GM12878 (cell line): ENCODE measurements at regions of chr9 and their contacts with region 1.

Region 1: GRCh38 chr9:15510789-15511575 is at the start of gene PSIP1:
- DNase-seq: peak; percentile 85
- ATAC-seq: peak; percentile 75
- H3K4me3 ChIP-seq: peak within 1 kb of the TSS; percentile 93
- H3K27ac ChIP-seq: peak within 1 kb of the TSS; percentile 99
- H3K4me1 ChIP-seq: peaks cover 13% of the 10 kb centered on the region
- H3K27me3 ChIP-seq: no peaks in the 10 kb centered on the region
- CTCF ChIP-seq: no peak
- EP300 ChIP-seq: peak; percentile 57 to 77; a peak in 2 of 4 replicates
- POLR2A ChIP-seq: peak; percentile 95
- RAD21 ChIP-seq: no peak; the same call in 1 of the 2 replicates
- polyA plus RNA-seq, gene PSIP1: 75.5 to 115 TPM

Region 2: GRCh38 chr9:15469406-15469805 is 41.6 kb before region 1 on chr9:
- CTCF ChIA-PET with region 1: interaction called, 5 read pairs
- POLR2A ChIA-PET with region 1: interaction called, 3 read pairs
- RAD21 ChIA-PET with region 1: interaction called, 4 read pairs
- SMC1A ChIA-PET with region 1: interaction called, 15 read pairs
- in situ Hi-C with region 1: no loop called
- intact Hi-C with region 1: no loop called
- DNase-seq: no peak
- ATAC-seq: no peak
- H3K4me3 ChIP-seq: no peak overlapping the region
- H3K27ac ChIP-seq: no peak overlapping the region
- H3K4me1 ChIP-seq: no peaks in the 10 kb centered on the region
- H3K27me3 ChIP-seq: no peaks in the 10 kb centered on the region
- CTCF ChIP-seq: no peak
- EP300 ChIP-seq: no peak
- POLR2A ChIP-seq: no peak
- RAD21 ChIP-seq: no peak

Region 3: GRCh38 chr9:15522130-15522755 is 11.3 kb after region 1 on chr9:
- CTCF ChIA-PET with region 1: interaction called, 23 read pairs
- POLR2A ChIA-PET with region 1: interaction called, 4 read pairs
- RAD21 ChIA-PET with region 1: interaction called, 9 read pairs
- SMC1A ChIA-PET with region 1: interaction called, 57 read pairs
- in situ Hi-C with region 1: no loop called
- intact Hi-C with region 1: no loop called
- DNase-seq: no peak
- ATAC-seq: no peak
- H3K4me3 ChIP-seq: no peak overlapping the region
- H3K27ac ChIP-seq: no peak overlapping the region
- H3K4me1 ChIP-seq: no peaks in the 10 kb centered on the region
- H3K27me3 ChIP-seq: no peaks in the 10 kb centered on the region
- CTCF ChIP-seq: no peak
- EP300 ChIP-seq: no peak
- POLR2A ChIP-seq: no peak
- RAD21 ChIP-seq: no peak

Region 4: GRCh38 chr9:15552636-15553527 is 41.9 kb after region 1 on chr9 and contains the start of gene CCDC171:
- CTCF ChIA-PET with region 1: interaction called, 14 read pairs
- POLR2A ChIA-PET with region 1: interaction called, 10 read pairs
- RAD21 ChIA-PET with region 1: interaction called, 13 read pairs
- SMC1A ChIA-PET with region 1: interaction called, 6 read pairs
- in situ Hi-C with region 1: no loop called
- intact Hi-C with region 1: loop called (anchors 2 kb)
- DNase-seq: peak; percentile 75
- ATAC-seq: peak; percentile 88
- H3K4me3 ChIP-seq: peak within 1 kb of the TSS; percentile 95
- H3K27ac ChIP-seq: peak within 1 kb of the TSS; percentile 80
- H3K4me1 ChIP-seq: peaks cover 8% of the 10 kb centered on the region
- H3K27me3 ChIP-seq: no peaks in the 10 kb centered on the region
- CTCF ChIP-seq: no peak
- EP300 ChIP-seq: no peak; a peak in 1 of 4 replicates
- POLR2A ChIP-seq: peak; percentile 74
- RAD21 ChIP-seq: no peak
- polyA plus RNA-seq, gene CCDC171: 1.00 to 1.1 TPM

Region 5: DNA sequence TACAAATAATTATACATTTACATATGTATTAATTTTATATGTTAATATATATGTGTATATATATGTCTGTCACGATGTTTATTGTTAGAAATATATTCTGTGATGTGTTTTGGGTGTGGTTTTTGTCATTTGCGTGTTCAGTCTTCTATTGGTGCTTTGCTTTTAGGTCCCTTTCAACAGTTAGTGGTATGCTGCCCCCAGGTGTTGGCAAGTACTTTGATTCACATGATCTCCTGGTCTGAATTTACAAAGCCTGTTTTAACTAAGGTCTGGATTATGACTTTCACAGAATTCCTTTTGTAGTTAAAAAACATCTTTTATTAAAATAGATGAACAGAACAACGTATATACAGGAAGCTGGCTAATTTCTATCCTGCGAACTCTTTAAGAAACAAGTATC is 313.3 kb after region 1 on chr9:
- CTCF ChIA-PET with region 1: no interaction called
- POLR2A ChIA-PET with region 1: no interaction called
- RAD21 ChIA-PET with region 1: no interaction called
- SMC1A ChIA-PET with region 1: no interaction called
- in situ Hi-C with region 1: no loop called
- intact Hi-C with region 1: no loop called
- DNase-seq: no peak
- ATAC-seq: 0 out of 3 replicates have a peak, but pooled peaks have one; percentile 18
- H3K4me3 ChIP-seq: no peak overlapping the region
- H3K27ac ChIP-seq: no peak overlapping the region
- H3K4me1 ChIP-seq: no peaks in the 10 kb centered on the region
- H3K27me3 ChIP-seq: no peaks in the 10 kb centered on the region
- CTCF ChIP-seq: no peak
- EP300 ChIP-seq: no peak
- POLR2A ChIP-seq: no peak
- RAD21 ChIP-seq: 0 out of 2 replicates have a peak, but pooled peaks have one; percentile 10